MCF 10A (cell line): ENCODE measurements at regions of chr6 and their contacts with region 1.

Region 1: GRCh38 chr6:37018198-37019064 is 13.0 kb downstream of the FGD2 start:
- DNase-seq: peak; percentile 87
- H3K4me3 Mint-ChIP-seq: no peak overlapping the region
- H3K27ac Mint-ChIP-seq: no peak overlapping the region
- H3K4me1 Mint-ChIP-seq: peaks cover 26% of the 10 kb centered on the region
- H3K27me3 Mint-ChIP-seq: no peaks in the 10 kb centered on the region
- CTCF ChIP-seq: peak; percentile 72

Region 2: GRCh38 chr6:36874443-36875249 is 143.8 kb before region 1 on chr6 and contains the start of gene PPIL1:
- CTCF ChIA-PET with region 1: interaction called, 28 read pairs
- POLR2A ChIA-PET with region 1: interaction called, 5 read pairs
- intact Hi-C with region 1: no loop called
- DNase-seq: peak; percentile 90
- H3K4me3 Mint-ChIP-seq: peak within 1 kb of the TSS; percentile 88
- H3K27ac Mint-ChIP-seq: peak within 1 kb of the TSS; percentile 95
- H3K4me1 Mint-ChIP-seq: peaks cover 14% of the 10 kb centered on the region
- H3K27me3 Mint-ChIP-seq: no peaks in the 10 kb centered on the region
- CTCF ChIP-seq: no peak
- total RNA-seq, gene PPIL1: 53.6 and 54.9 TPM in 2 replicates

Region 3: GRCh38 chr6:36933102-36933501 is 85.3 kb before region 1 on chr6:
- CTCF ChIA-PET with region 1: interaction called, 10 read pairs
- POLR2A ChIA-PET with region 1: no interaction called
- intact Hi-C with region 1: no loop called
- DNase-seq: peak; percentile 43
- H3K4me3 Mint-ChIP-seq: no peak overlapping the region
- H3K27ac Mint-ChIP-seq: peak overlapping the region; percentile 8
- H3K4me1 Mint-ChIP-seq: peaks cover 33% of the 10 kb centered on the region
- H3K27me3 Mint-ChIP-seq: no peaks in the 10 kb centered on the region
- CTCF ChIP-seq: no peak

Region 4: GRCh38 chr6:37051138-37052026 is 33.0 kb after region 1 on chr6:
- CTCF ChIA-PET with region 1: interaction called, 314 read pairs
- POLR2A ChIA-PET with region 1: interaction called, 50 read pairs
- intact Hi-C with region 1: loop called (anchors 1 kb)
- DNase-seq: peak; percentile 75
- H3K4me3 Mint-ChIP-seq: no peak overlapping the region
- H3K27ac Mint-ChIP-seq: no peak overlapping the region
- H3K4me1 Mint-ChIP-seq: peaks cover 17% of the 10 kb centered on the region
- H3K27me3 Mint-ChIP-seq: no peaks in the 10 kb centered on the region
- CTCF ChIP-seq: peak; percentile 86

Region 5: GRCh38 chr6:37141281-37142049 is 123.0 kb after region 1 on chr6:
- CTCF ChIA-PET with region 1: no interaction called
- POLR2A ChIA-PET with region 1: no interaction called
- intact Hi-C with region 1: no loop called
- DNase-seq: no peak
- H3K4me3 Mint-ChIP-seq: no peak overlapping the region
- H3K27ac Mint-ChIP-seq: no peak overlapping the region
- H3K4me1 Mint-ChIP-seq: peaks cover 15% of the 10 kb centered on the region
- H3K27me3 Mint-ChIP-seq: no peaks in the 10 kb centered on the region
- CTCF ChIP-seq: no peak

Region 6: GRCh38 chr6:37190159-37190535 is 171.7 kb after region 1 on chr6:
- CTCF ChIA-PET with region 1: interaction called, 17 read pairs
- POLR2A ChIA-PET with region 1: no interaction called
- intact Hi-C with region 1: no loop called
- DNase-seq: no peak
- H3K4me3 Mint-ChIP-seq: no peak overlapping the region
- H3K27ac Mint-ChIP-seq: no peak overlapping the region
- H3K4me1 Mint-ChIP-seq: no peaks in the 10 kb centered on the region
- H3K27me3 Mint-ChIP-seq: no peaks in the 10 kb centered on the region
- CTCF ChIP-seq: no peak

Region 7: GRCh38 chr6:37314487-37315156 is 296.2 kb after region 1 on chr6:
- CTCF ChIA-PET with region 1: interaction called, 3 read pairs
- POLR2A ChIA-PET with region 1: no interaction called
- intact Hi-C with region 1: loop called (anchors 5 kb)
- DNase-seq: peak; percentile 63
- H3K4me3 Mint-ChIP-seq: no peak overlapping the region
- H3K27ac Mint-ChIP-seq: no peak overlapping the region
- H3K4me1 Mint-ChIP-seq: no peaks in the 10 kb centered on the region
- H3K27me3 Mint-ChIP-seq: no peaks in the 10 kb centered on the region
- CTCF ChIP-seq: peak; percentile 39